Posterior vena cava (tissue), 2 donors: ENCODE measurements at regions of chr9 and their contacts with region 1.

Region 1: DNA sequence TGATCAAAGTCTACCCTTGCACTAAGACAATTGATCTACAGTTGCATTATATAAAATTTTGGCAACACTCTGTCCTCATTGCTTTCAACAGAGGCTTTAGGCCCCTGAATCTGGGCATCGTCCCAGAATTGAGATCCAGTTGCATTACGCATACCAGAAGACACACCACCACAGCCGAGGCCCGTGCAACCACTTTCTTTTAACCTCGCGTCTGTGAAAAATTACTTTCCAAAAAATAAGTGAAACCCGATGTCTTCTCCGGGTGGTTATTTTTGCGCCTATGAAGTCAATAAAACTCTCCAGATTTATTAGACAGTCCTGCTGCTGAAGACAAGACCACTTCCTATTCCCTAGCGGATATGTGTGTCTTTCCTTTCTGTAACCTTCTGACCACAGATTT is 52.1 kb upstream of the NFIB start:
- DNase-seq: no peak

Region 2: DNA sequence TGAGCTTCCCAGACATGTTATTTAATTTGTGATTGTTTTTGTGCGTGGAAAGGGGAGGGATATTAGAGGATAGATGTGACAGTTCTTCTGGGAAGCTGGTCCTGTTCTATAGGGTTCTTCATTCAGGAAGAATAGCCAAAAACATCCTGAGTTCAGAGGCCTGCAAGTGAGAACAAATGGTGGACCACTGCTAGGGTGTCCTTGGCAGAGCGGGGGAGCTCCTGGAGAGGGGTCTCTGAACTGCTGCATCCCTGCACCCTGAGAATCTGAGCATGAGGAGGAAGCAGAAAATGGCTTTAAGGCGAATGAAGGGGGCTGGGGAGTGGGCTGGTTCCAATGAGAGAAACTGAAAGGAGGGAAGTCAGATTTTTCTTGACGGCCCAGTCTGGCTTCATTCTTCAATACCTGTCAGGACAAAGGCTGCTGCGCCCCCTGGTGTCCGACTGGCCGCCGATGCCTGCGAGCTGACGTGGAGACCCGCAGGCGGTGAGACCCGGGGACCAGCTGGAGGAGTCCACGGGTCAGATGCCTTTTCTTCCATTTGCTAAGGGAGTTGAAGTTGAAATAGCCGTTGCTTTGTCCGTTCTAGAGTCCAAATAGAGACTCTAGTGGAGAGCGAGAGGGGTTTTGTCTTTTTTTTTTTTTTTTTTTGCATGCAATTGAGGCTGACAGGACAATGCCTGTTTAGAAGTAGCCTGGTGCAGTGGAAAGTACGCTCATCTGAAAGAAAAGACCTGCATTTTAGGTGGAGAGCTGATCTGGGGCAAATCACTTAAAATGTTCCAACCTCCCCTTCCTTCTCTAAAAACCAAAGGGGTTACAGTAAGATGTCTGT is 12.6 kb before region 1 on chr9:
- intact Hi-C with region 1: loop called in 1 of 2 experiments (anchors 2 kb)
- DNase-seq: peak; percentile 97

Region 3: DNA sequence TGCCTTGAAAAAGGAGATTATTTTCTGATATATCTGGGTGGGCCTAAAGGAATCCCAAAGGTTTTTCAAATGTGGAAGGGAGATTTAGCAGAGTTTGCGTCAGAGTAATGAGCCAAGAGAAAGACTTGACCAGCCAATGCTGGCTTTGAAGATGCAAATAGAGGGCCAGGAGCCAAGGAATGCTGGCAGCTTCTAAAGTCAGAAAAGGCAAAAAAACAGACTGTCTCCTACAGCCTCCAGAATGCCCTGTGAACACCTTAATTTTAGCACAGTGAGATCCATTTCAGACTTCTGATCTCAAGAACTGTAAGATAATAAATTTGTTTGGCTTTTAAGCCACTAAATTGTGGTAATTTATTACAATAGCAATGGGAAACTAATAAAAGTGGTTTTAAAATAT is 666.8 kb after region 1 on chr9:
- intact Hi-C with region 1: no loop called
- DNase-seq: no peak